ENCODE measurements at regions of chr4 and their contacts with region 1.

Region 1: DNA sequence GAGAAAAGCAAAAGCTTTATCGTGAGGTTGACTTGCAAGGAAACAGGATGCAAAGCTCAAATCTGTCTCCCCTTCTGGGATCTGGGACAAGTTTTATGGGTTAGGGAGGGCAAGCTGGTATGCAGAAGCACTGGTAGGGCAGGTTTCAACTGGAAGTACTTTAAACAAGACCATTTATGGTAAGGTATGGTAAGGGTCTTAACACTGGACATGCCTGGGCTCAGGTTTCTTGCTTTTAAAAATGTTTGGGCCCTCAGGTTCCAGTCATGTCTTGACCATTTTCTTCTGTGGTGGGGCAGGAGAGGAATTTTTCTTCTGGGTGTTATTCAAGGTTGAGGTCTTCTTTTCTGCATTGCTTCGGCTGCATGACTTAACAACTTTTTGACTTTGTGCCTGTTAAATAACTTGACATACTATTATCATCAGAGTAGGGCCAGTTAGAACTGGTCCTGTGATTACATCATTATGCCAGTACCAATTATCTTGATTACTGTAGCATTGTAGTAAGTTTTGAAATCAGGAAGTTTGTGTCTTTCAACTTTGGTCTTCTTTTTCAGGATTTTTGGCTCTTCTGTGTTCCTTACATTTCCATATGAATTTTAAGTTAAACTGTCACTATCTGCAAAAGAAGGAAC is 33.7 kb downstream of the CD38 start:
- DNase-seq: no peak
- ATAC-seq: no peak
- H3K4me3 ChIP-seq: no peak overlapping the region
- H3K27ac ChIP-seq: no peak overlapping the region
- H3K4me1 ChIP-seq: peaks cover 0 to 32% (median 0%) of the 10 kb centered on the region in 12 donors
- H3K27me3 ChIP-seq: no peaks in the 10 kb centered on the region
- CTCF ChIP-seq: no peak
- POLR2A ChIP-seq: no peak

Region 2: GRCh38 chr4:15956179-15956850 is 144.5 kb after region 1 on chr4:
- intact Hi-C with region 1: loop called in 8 of 10 experiments (anchors 1 to 5 kb)
- DNase-seq: peak; percentile 60 to 83 (median 72)
- ATAC-seq: peak in 3 of 4 donors; percentile 85 to 92 (median 86)
- H3K4me3 ChIP-seq: no peak overlapping the region
- H3K27ac ChIP-seq: no peak overlapping the region
- H3K4me1 ChIP-seq: peaks cover 0 to 4% (median 0%) of the 10 kb centered on the region in 12 donors
- H3K27me3 ChIP-seq: no peaks in the 10 kb centered on the region
- CTCF ChIP-seq: peak; percentile 82 to 93 (median 86)
- POLR2A ChIP-seq: no peak

Measured in heart left ventricle (tissue), 16 donors.